ENCODE measurements at regions of chr18 and their contacts with region 1.

Region 1: DNA sequence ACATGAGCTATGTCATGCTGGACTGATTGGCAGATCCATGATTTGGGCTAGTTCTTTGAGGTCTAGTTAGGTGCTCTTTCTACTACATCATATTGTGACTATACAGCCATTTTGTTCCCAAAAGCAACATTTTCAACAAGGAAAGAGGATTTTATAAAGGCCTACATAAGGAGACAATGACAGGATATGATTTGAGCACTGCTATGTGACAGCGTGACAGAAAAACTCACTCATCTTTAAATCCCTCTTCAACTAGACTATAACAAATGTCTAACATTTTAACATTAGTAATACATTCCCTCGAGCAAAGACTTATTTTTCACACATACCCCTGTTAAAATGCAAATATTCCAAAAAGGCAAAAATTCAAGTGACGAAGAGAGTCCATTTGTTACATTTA is 209.6 kb upstream of the CHST9 start:
- DNase-seq: no peak
- H3K4me3 ChIP-seq: no peak overlapping the region
- H3K27ac ChIP-seq: no peak overlapping the region
- H3K4me1 ChIP-seq: no peaks in the 10 kb centered on the region
- H3K27me3 ChIP-seq: no peaks in the 10 kb centered on the region
- CTCF ChIP-seq: no peak
- EP300 ChIP-seq: no peak
- POLR2A ChIP-seq: no peak

Region 2: GRCh38 chr18:27349284-27349882 is 45.3 kb before region 1 on chr18:
- intact Hi-C with region 1: loop called in 1 of 4 experiments (anchors 5 kb)
- DNase-seq: no peak
- H3K4me3 ChIP-seq: no peak overlapping the region
- H3K27ac ChIP-seq: no peak overlapping the region
- H3K4me1 ChIP-seq: no peaks in the 10 kb centered on the region
- H3K27me3 ChIP-seq: no peaks in the 10 kb centered on the region
- CTCF ChIP-seq: no peak
- EP300 ChIP-seq: no peak
- POLR2A ChIP-seq: no peak

Region 3: GRCh38 chr18:27491772-27492171 is 97.1 kb after region 1 on chr18:
- intact Hi-C with region 1: no loop called
- DNase-seq: no peak
- H3K4me3 ChIP-seq: no peak overlapping the region
- H3K27ac ChIP-seq: no peak overlapping the region
- H3K4me1 ChIP-seq: no peaks in the 10 kb centered on the region
- H3K27me3 ChIP-seq: no peaks in the 10 kb centered on the region
- CTCF ChIP-seq: no peak
- EP300 ChIP-seq: no peak
- POLR2A ChIP-seq: no peak

Region 4: DNA sequence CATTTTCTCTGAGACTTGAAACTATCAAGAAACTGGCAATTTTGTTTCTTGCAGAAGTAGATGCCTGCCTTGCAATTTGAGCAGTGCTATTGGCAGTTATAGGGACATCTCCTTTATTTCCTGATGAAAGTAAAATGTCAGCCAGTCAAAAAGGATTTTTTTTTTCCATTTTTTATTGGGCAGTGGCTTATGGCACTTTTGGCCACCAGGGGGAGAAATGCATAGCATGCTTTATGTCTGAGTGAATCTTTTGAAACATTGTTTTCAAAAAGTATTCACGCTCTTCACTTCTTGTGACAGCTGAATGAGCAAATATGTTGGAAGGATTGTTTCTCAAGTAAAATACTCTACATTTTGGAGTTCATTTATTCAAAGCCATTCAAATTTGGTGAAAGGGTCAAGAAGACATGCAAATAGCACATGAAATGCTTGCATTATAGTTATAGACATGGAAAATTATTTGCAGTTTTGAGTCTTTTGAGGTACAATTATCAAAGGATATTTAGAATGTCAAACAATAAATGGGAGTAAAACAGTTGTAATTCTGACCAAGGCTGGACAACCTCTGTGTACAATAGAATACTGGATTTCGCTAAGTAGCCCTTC is 291.2 kb after region 1 on chr18:
- intact Hi-C with region 1: no loop called
- DNase-seq: no peak
- H3K4me3 ChIP-seq: no peak overlapping the region
- H3K27ac ChIP-seq: no peak overlapping the region
- H3K4me1 ChIP-seq: no peaks in the 10 kb centered on the region
- H3K27me3 ChIP-seq: no peaks in the 10 kb centered on the region
- CTCF ChIP-seq: no peak
- EP300 ChIP-seq: no peak
- POLR2A ChIP-seq: no peak

Region 5: GRCh38 chr18:27967913-27968824 is 573.5 kb after region 1 on chr18:
- intact Hi-C with region 1: no loop called
- DNase-seq: no peak
- H3K4me3 ChIP-seq: no peak overlapping the region
- H3K27ac ChIP-seq: no peak overlapping the region
- H3K4me1 ChIP-seq: no peaks in the 10 kb centered on the region
- H3K27me3 ChIP-seq: no peaks in the 10 kb centered on the region
- CTCF ChIP-seq: no peak
- EP300 ChIP-seq: no peak
- POLR2A ChIP-seq: no peak

Measured in ovary (tissue), 10 donors.